Endothelial cell of umbilical vein (primary cell): ENCODE measurements at regions of chr10 and their contacts with region 1.

Region 1: DNA sequence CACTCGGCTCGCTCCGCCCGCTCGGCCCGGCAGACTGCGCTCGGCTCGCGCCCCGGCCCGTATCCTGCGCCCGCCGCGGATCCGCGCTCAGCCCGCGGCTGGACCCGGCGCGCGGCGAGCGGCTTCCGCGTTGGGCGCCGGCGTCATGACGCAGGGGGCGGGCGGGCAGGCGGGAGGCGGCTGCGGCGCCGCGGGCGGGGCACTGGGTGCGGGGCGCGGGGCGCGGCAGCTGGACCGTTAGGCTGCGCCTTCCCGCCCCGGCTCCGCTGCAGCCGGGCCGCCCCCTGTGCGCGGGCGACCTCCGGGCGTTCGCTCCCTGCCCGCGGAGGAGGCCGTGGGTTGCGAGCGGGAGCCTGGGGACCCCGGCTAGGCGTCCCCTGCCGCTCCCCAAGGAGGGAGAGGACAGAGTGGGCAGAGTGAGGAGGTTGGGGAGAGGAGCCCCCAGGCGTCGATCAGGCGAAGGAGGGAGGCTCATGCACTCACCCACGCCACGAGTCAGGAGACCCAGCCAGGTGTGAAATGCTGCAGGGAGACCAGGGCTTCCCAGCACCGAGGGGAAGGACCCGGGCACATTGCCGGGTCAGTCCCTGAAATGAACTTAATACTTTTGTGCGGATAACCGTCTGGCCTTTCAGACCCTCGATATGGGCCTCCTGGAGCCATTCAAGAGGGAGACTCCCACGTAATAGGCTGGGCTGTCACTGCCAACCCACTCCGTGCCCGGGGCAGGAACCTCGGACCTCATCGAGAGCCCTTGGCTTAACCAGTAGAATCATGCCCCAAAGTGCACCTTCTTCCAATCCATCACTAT is at the start of gene PIP4K2A:
- DNase-seq: peak; percentile 58
- H3K4me3 ChIP-seq: peak within 1 kb of the TSS; percentile 89 to 100 (median 89)
- H3K27ac ChIP-seq: peak within 1 kb of the TSS; percentile 55
- H3K4me1 ChIP-seq: peaks cover 17% of the 10 kb centered on the region
- H3K27me3 ChIP-seq: no peaks in the 10 kb centered on the region
- CTCF ChIP-seq: no peak
- POLR2A ChIP-seq: peak; percentile 74
- total RNA-seq, gene PIP4K2A: 32.6 and 35.4 TPM in 2 replicates

Region 2: DNA sequence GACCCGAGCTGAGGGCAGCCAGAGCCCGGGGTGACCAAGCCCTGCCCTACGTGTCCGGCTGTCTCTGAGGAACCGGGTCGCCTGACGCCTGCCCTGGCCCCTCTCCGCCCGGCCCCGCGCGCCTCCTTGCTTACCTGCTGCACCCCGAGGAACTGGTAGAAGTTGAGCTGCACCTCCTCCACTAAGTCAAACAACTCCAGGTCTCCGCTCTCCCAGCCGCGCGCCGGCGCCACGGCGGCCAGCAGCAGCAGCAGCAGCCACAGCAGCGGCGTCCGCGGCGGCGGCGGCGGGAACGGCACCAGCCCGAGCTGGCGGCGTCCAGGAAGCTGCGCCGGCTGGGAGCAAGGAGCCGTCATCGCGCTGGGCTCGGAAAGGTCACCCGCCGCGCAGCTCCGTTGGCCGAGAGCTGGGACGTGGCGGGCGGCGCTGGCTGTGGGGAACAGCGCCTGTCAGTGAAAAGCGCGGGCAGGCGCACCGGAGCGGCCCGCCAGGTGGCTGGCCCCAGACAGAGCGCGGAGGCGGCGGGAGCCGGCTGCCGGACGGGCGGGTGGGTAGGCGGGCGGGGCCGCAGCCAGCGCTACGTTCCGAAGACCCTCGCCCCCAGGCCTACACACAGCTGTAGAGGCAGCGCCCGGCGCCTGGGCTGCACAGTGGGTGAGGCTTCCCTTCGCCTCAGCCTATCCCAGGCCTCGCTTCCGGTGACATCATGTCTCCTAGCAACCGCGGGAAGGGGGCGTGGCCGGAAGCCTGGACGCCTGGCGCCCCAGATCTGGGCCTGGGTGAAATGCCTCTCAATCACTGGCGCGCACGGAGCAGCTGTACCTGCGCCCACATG is 711.4 kb before region 1 on chr10 and contains the start of gene DNAJC1:
- CTCF ChIA-PET with region 1: no interaction called
- POLR2A ChIA-PET with region 1: no interaction called
- dilution Hi-C with region 1: no loop called
- intact Hi-C with region 1: loop called (anchors 5 kb)
- DNase-seq: peak; percentile 95
- H3K4me3 ChIP-seq: peak within 1 kb of the TSS; percentile 47 to 93 (median 86)
- H3K27ac ChIP-seq: peak within 1 kb of the TSS; percentile 86
- H3K4me1 ChIP-seq: peaks cover 10% of the 10 kb centered on the region
- H3K27me3 ChIP-seq: peaks cover 3 to 27% of the 10 kb centered on the region in 2 experiments
- CTCF ChIP-seq: no peak
- POLR2A ChIP-seq: peak; percentile 80
- total RNA-seq, gene DNAJC1: 19.7 and 22.5 TPM in 2 replicates

Region 3: DNA sequence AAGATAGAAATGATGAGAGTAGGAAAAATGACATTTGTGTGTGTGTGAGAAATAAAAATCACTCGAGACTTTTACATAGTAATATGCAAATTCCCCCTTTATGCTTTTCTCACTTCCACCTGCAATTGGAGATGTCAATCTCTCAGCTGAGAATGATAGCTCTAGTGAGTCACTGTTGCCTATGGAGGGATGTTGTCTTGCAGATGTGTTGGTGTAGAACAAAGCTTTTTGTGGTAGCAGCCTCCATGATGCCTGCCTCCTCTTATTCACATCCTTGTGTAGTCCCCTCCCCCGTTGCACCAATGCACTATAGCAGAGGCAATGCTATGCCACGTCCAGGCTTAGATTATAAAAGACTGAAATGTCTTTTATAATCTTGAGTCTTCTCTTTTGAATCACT is 335.6 kb before region 1 on chr10:
- CTCF ChIA-PET with region 1: no interaction called
- POLR2A ChIA-PET with region 1: no interaction called
- dilution Hi-C with region 1: no loop called
- intact Hi-C with region 1: no loop called
- DNase-seq: no peak
- H3K4me3 ChIP-seq: no peak overlapping the region
- H3K27ac ChIP-seq: no peak overlapping the region
- H3K4me1 ChIP-seq: peaks cover 10% of the 10 kb centered on the region
- H3K27me3 ChIP-seq: no peaks in the 10 kb centered on the region
- CTCF ChIP-seq: no peak
- POLR2A ChIP-seq: no peak

Region 4: DNA sequence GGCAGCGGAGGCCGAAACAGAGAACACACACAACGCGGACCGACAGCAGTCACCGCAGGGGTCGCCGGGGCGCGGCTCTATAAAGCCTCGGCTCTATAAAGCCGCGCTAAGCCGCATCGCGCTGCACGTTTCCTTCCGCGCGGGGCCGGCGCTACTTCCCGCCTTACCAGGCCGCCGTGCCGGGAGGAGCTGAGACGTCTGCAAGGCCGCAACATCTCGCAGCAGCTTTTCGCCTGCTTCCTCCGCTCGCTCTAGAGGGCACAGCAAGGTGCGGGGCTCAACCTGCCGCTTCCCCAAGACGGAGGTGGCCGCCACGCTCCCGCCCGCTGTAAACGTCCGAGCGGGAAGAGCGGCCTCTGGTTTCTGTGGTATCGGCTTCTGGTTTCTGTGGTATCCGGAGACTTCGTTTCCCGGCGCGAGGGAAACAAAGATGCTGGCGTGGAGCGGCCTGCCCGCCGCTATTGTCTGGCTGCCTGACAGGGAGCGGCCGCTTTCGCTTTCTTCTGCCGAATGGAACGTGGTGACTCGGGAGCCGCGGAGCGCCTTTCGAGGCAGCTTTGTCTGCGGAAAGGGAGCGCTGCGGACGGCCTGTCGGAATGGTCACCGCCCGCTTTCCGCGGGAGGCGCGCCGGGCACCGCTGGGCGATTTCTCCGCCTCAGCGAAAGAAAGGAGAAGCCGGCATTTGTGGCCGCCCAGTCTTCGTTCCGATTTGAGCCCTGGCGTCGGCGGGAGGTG is 277.6 kb before region 1 on chr10:
- CTCF ChIA-PET with region 1: no interaction called
- POLR2A ChIA-PET with region 1: no interaction called
- dilution Hi-C with region 1: no loop called
- intact Hi-C with region 1: loop called (anchors 10 kb)
- DNase-seq: peak; percentile 91
- H3K4me3 ChIP-seq: peak overlapping the region; percentile 66 to 74 (median 69)
- H3K27ac ChIP-seq: peak overlapping the region; percentile 94
- H3K4me1 ChIP-seq: peaks cover 27% of the 10 kb centered on the region
- H3K27me3 ChIP-seq: peaks cover 2 to 14% of the 10 kb centered on the region in 2 experiments
- CTCF ChIP-seq: peak; percentile 7 to 36
- POLR2A ChIP-seq: peak; percentile 93

Region 5: DNA sequence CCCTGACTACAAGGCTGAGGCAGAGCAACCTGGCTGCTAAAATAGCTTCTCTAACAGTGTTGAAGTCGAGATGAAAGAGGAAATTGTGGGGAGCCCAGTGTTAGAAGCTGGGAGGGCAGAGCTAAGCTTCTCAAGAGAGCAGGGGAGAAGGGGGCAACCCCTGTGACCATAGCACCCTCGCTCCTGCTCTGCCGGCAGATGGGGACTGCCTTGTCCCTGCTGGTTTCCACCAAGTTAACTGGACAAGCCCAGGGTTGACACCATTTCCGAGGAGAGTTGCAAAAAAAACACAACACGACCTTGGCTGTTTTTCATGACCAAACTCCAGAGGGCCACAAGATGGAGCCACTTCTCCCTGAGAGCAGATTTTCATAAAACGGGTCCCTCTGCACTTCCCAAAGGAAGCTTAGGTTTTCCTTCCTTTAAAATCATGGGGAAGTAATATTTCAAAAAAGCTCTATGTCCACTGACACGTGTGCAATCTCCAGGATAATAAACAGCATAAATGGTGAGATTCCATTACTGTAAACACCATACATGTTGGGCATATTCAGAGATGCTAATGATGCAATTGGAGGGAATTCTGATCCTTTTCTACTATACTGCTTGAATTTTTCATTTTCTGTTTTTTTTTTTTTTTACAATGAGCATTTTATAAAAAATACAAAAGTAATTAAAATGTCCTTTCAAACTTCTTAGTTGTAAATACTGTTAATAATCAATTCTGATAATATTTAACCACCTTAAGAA is 140.7 kb before region 1 on chr10:
- CTCF ChIA-PET with region 1: interaction called, 15 read pairs
- POLR2A ChIA-PET with region 1: no interaction called
- dilution Hi-C with region 1: no loop called
- intact Hi-C with region 1: no loop called
- DNase-seq: peak; percentile 18
- H3K4me3 ChIP-seq: no peak overlapping the region
- H3K27ac ChIP-seq: no peak overlapping the region
- H3K4me1 ChIP-seq: no peaks in the 10 kb centered on the region
- H3K27me3 ChIP-seq: no peaks in the 10 kb centered on the region
- CTCF ChIP-seq: peak; percentile 44 to 52
- POLR2A ChIP-seq: no peak

Region 6: GRCh38 chr10:22620140-22620857 is 94.4 kb before region 1 on chr10:
- CTCF ChIA-PET with region 1: no interaction called
- POLR2A ChIA-PET with region 1: no interaction called
- dilution Hi-C with region 1: no loop called
- intact Hi-C with region 1: loop called (anchors 2 kb)
- DNase-seq: peak; percentile 91
- H3K4me3 ChIP-seq: no peak overlapping the region
- H3K27ac ChIP-seq: peak overlapping the region; percentile 81
- H3K4me1 ChIP-seq: peaks cover 66% of the 10 kb centered on the region
- H3K27me3 ChIP-seq: no peaks in the 10 kb centered on the region
- CTCF ChIP-seq: no peak
- POLR2A ChIP-seq: no peak

Region 7: DNA sequence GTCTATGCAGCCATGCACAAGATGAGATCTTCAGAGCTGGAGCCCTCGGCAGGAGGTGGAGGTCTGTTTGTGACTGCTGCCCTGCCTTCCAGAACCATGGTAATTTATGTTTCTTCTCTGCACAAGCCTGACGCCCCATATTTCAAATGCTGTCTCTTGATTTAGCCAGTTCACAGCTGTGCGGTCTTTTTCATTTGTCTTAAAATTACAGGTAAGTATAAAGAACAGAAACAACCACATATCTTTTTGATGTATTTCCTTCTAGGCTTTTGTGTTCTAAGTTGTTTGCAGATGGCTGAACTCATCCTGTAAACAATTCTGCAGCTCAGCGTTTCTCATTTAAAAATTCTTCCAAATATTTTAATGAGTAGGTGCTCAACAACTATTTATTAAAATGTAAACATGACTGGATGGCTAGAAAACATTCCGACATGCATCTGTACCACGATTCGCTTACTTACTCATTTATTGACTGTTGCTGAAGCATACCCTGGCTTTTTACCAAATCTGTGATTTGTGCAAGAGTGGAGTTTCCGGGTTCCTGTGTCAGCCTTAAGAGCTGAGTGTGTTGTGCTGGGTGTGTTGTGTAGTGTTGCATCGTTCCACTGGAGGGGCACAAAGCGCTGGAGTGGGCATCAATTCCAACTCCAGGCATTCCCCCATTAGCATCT is 59.2 kb before region 1 on chr10:
- CTCF ChIA-PET with region 1: no interaction called
- POLR2A ChIA-PET with region 1: no interaction called
- dilution Hi-C with region 1: no loop called
- intact Hi-C with region 1: no loop called
- DNase-seq: no peak
- H3K4me3 ChIP-seq: no peak overlapping the region
- H3K27ac ChIP-seq: no peak overlapping the region
- H3K4me1 ChIP-seq: no peaks in the 10 kb centered on the region
- H3K27me3 ChIP-seq: no peaks in the 10 kb centered on the region
- CTCF ChIP-seq: no peak
- POLR2A ChIP-seq: no peak

Region 8: DNA sequence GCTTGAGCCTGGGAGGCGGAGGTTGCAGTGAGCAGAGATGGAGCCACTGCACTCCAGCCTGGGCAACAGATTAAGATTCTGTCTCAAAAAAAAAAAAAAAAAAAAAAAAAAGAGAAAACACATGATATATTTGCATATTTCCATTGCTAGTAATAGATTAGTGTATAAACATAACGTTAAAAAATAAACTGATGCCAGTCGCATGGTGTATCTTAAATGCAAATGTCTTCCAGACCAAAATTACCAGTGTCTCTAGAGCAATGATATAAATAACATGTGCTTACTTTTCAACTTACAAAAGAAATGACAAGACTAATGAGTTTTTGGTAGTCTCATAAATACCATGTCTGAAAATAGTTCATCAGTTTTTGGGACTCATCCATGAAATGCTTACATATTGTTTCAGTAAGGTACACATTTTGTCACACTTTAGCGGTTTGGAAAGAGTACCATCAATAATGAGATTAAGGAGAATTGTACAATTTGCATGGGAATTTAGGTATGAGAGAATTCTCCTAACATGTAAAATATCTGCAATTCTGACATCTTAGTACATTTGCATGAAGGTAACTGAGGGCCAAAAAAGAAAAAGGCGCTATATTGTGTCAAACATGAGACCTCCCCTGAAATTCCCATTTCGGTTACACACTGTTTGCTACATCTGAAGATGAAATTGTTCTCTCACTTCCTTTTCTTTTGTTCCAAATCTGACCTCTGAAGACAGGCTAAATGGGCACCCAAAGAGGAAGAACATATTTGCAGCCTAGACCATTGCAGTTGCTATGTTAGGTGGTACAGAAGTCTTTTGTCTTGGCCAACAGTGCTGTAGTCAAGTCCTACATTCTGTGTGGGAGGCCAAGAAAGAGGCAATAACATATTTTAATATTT is 51.2 kb after region 1 on chr10:
- CTCF ChIA-PET with region 1: no interaction called
- POLR2A ChIA-PET with region 1: no interaction called
- dilution Hi-C with region 1: no loop called
- intact Hi-C with region 1: no loop called
- DNase-seq: no peak
- H3K4me3 ChIP-seq: no peak overlapping the region
- H3K27ac ChIP-seq: no peak overlapping the region
- H3K4me1 ChIP-seq: no peaks in the 10 kb centered on the region
- H3K27me3 ChIP-seq: peaks cover 6 to 7% of the 10 kb centered on the region in 2 experiments
- CTCF ChIP-seq: no peak
- POLR2A ChIP-seq: no peak

Region 9: GRCh38 chr10:22823109-22823508 is 108.4 kb after region 1 on chr10:
- CTCF ChIA-PET with region 1: interaction called, 3 read pairs
- POLR2A ChIA-PET with region 1: no interaction called
- dilution Hi-C with region 1: no loop called
- intact Hi-C with region 1: loop called (anchors 10 kb)
- DNase-seq: peak; percentile 81
- H3K4me3 ChIP-seq: no peak overlapping the region
- H3K27ac ChIP-seq: peak overlapping the region; percentile 68
- H3K4me1 ChIP-seq: peaks cover 38% of the 10 kb centered on the region
- H3K27me3 ChIP-seq: no peaks in the 10 kb centered on the region
- CTCF ChIP-seq: no peak
- POLR2A ChIP-seq: no peak